ENCODE measurements at regions of chr3 and their contacts with region 1.

Region 1: GRCh38 chr3:172332256-172333041 is 115.8 kb downstream of the GHSR start:
- DNase-seq: peak; percentile 55
- ATAC-seq: peak; percentile 89

Region 2: DNA sequence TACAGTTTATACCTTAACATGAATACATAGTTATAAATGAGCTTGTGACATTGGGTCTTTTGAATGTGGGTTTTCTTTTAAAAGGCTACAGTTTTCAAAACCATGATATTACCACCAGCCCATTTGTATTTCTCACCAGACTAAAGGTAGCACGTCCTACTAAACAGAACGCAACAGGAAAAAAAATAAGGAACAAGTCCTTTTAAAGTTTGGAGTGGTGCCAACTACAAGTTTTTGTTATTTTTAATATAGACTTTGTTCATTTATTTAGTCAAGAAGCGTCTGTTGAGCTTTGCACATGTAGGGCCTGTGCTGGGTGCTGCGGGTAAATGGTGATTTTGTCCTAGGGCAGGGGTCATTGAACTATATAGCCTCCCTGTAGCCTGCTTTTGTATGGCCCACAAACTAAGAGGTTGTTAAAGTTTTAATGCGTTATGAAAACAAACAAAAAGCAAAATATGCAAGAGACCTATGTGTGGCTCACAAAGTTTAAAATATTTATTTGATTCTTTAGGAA is 48.5 kb before region 1 on chr3:
- intact Hi-C with region 1: no loop called
- DNase-seq: no peak
- ATAC-seq: no peak

Region 3: GRCh38 chr3:172294223-172294806 is 38.1 kb before region 1 on chr3:
- intact Hi-C with region 1: no loop called
- DNase-seq: no peak
- ATAC-seq: no peak

Region 4: DNA sequence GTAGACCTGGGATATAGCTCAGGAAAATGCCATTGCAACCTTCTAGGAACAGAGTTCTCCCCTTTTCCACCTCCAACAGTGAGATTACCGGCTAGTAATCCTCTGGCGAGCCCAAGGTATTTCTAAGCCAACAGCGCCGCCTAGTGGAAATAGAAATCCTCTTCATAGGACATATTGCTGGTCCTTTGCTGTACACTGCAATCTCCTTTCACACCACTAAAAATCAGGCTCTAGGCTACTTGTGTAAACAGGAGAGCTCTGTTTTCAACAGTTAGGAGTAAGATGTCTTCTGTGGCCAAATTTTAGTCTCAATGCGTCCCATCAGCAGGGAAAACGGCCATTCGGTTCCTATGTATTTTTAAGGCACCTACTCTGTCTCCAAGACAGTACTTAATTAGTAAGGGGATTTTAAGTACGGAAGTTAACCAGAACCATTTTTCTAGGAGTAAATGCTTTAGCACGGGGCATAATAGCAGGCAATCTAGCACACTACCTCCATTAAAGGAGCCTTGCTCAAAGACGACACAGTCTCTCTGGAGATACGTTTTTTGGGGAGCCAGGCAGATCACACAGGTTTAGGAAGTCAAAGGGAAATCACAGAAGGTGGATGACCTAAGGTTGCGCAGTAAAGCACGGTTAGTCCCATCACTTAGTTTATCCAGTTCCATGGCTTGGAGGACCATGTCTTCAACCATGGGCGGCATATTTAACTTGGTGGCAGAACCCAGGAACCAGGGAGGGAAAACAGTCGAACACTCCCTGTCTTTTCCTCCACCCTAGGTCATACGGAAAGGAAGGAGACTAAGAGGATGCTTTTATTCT is 334.6 kb after region 1 on chr3:
- intact Hi-C with region 1: loop called in 1 of 2 experiments (anchors 5 kb)
- DNase-seq: peak; percentile 74
- ATAC-seq: peak; percentile 97 to 98

Measured in left cardiac atrium (tissue), 4 donors.